AG04450 (cell line): ENCODE measurements at regions of chr11 and their contacts with region 1.

Region 1: GRCh38 chr11:130223291-130223971 is 63.8 kb downstream of the ST14 start:
- DNase-seq: no peak
- H3K4me3 ChIP-seq: no peak overlapping the region
- H3K27ac ChIP-seq: no peak overlapping the region
- H3K27me3 ChIP-seq: peaks cover 8% of the 10 kb centered on the region
- CTCF ChIP-seq: no peak

Region 2: DNA sequence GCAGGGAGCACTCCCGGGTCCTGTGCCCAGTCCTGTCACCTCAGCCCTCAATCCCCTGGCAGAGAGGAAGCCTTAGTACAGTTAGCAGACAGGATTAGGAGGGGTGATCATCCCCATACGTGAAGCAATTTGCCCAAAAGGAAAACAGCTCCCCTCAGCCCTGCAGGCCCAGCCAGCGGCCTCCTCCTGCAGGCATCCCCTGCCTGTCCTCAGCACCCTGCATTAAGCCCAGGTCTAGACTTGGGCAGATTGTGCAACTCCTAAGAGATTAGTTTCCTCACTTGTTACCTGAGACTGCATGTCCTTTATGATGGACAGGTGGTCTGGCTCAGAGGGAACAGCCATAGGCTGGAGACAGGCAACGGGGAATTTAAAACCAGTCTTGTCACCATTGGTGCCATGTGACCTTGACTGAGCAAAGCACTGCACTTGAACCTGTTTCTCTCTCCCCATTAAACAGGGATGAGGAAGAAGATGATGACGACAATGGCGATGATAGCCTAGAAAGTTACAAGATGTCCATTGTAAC is 503.2 kb before region 1 on chr11:
- CTCF ChIA-PET with region 1: no interaction called
- POLR2A ChIA-PET with region 1: no interaction called
- DNase-seq: no peak
- H3K4me3 ChIP-seq: no peak overlapping the region
- H3K27ac ChIP-seq: no peak overlapping the region
- H3K27me3 ChIP-seq: peaks cover 3% of the 10 kb centered on the region
- CTCF ChIP-seq: no peak

Region 3: GRCh38 chr11:130213143-130213978 is 10.1 kb before region 1 on chr11:
- CTCF ChIA-PET with region 1: interaction called, 22 read pairs
- POLR2A ChIA-PET with region 1: no interaction called
- DNase-seq: no peak
- H3K4me3 ChIP-seq: no peak overlapping the region
- H3K27ac ChIP-seq: no peak overlapping the region
- H3K27me3 ChIP-seq: peaks cover 53% of the 10 kb centered on the region
- CTCF ChIP-seq: peak; percentile 88